ENCODE measurements at regions of chr1 and their contacts with region 1.

Region 1: GRCh38 chr1:119964673-119965363 is 68.5 kb upstream of the ADAM30 start:
- DNase-seq: no peak
- H3K4me3 ChIP-seq: no peak overlapping the region
- H3K4me3 Mint-ChIP-seq: no peak overlapping the region
- H3K27ac ChIP-seq: peak overlapping the region in 1 of 2 donors; percentile 52
- H3K27ac Mint-ChIP-seq: peak overlapping the region in 4 of 7 donors; percentile 2 to 55 (median 37)
- H3K4me1 ChIP-seq: peaks cover 0 to 7% of the 10 kb centered on the region in 2 donors
- H3K4me1 Mint-ChIP-seq: peaks cover 7% of the 10 kb centered on the region
- H3K27me3 ChIP-seq: no peaks in the 10 kb centered on the region
- H3K27me3 Mint-ChIP-seq: peaks cover 0 to 4% (median 0%) of the 10 kb centered on the region in 3 donors
- CTCF ChIP-seq: no peak

Region 2: DNA sequence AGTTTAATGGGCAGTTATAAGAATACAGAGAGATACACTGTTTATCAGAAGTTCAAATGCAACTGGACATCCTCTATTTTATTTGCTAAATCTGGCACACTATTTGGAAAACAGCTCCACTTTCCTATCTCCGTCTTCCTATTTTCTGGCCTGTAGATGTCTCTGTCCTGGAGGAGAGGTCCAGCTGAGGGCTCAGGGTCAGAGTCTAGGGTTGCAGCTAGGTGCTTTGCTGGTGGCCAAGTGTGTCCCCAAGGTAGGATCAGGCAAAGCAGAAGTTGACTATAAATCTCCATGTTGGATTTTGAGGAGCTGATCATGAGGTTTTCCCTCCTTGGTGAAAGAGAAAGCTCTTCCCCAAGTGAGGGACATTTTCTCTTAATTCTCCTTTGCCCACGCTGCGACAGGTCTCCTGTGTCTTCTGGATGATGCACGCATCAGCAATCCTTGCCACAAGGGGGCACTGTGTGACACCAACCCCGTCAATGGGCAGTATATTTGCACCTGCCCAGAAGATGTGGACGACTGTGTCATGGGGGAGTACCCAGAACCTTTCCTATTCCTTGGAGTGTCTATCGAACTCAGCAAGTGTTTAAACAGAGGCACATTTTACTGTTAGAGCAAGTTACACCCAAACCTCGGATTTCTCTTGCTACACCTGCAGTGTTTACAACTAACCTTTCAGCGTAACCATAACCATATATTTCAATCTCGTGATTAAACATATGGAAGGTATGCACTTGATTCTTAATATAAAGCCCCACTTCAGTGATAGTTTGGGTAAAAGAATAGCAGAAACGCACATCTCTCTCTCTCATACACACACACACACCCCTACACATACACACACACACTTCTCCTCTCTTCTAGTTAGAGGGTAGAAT is 78.7 kb before region 1 on chr1:
- intact Hi-C with region 1: no loop called
- DNase-seq: peak; percentile 36 to 48 (median 46)
- H3K4me3 ChIP-seq: no peak overlapping the region
- H3K4me3 Mint-ChIP-seq: no peak overlapping the region
- H3K27ac ChIP-seq: no peak overlapping the region
- H3K27ac Mint-ChIP-seq: peak overlapping the region in 1 of 7 donors; percentile 10
- H3K4me1 ChIP-seq: peaks cover 37 to 44% of the 10 kb centered on the region in 2 donors
- H3K4me1 Mint-ChIP-seq: peaks cover 6% of the 10 kb centered on the region
- H3K27me3 ChIP-seq: no peaks in the 10 kb centered on the region
- H3K27me3 Mint-ChIP-seq: peaks cover 0 to 5% (median 0%) of the 10 kb centered on the region in 3 donors
- CTCF ChIP-seq: peak; percentile 86

Region 3: GRCh38 chr1:119910618-119911017 is 54.2 kb before region 1 on chr1:
- intact Hi-C with region 1: loop called in 1 of 2 experiments (anchors 5 kb)
- DNase-seq: no peak
- H3K4me3 ChIP-seq: no peak overlapping the region
- H3K4me3 Mint-ChIP-seq: no peak overlapping the region
- H3K27ac ChIP-seq: no peak overlapping the region
- H3K27ac Mint-ChIP-seq: peak overlapping the region in 1 of 7 donors; percentile 8
- H3K4me1 ChIP-seq: no peaks in the 10 kb centered on the region
- H3K4me1 Mint-ChIP-seq: no peaks in the 10 kb centered on the region
- H3K27me3 ChIP-seq: no peaks in the 10 kb centered on the region
- H3K27me3 Mint-ChIP-seq: peaks cover 0 to 2% (median 0%) of the 10 kb centered on the region in 3 donors
- CTCF ChIP-seq: no peak

Measured in CD14-positive monocyte (primary cell).